CD8-positive, alpha-beta memory T cell (primary cell): ENCODE measurements at regions of chr6 and their contacts with region 1.

Region 1: GRCh38 chr6:26234421-26235296 is 130.3 kb upstream of the BTN3A2 start:
- DNase-seq: peak; percentile 38 to 84 (median 76)
- H3K4me3 ChIP-seq: peak overlapping the region; percentile 94
- H3K4me3 Mint-ChIP-seq: peak overlapping the region; percentile 87 to 95 (median 91)
- H3K27ac ChIP-seq: peak overlapping the region; percentile 88
- H3K27ac Mint-ChIP-seq: peak overlapping the region; percentile 87 to 98 (median 96)
- H3K4me1 ChIP-seq: peaks cover 19% of the 10 kb centered on the region
- H3K4me1 Mint-ChIP-seq: peaks cover 28 to 35% (median 35%) of the 10 kb centered on the region in 3 donors
- H3K27me3 ChIP-seq: no peaks in the 10 kb centered on the region
- H3K27me3 Mint-ChIP-seq: peaks cover 0 to 5% of the 10 kb centered on the region in 2 donors

Region 2: GRCh38 chr6:26175428-26176181 is 59.1 kb before region 1 on chr6:
- CTCF ChIA-PET with region 1: interaction called, 4 read pairs
- POLR2A ChIA-PET with region 1: interaction called, 24 read pairs
- DNase-seq: peak; percentile 8 to 63 (median 52)
- H3K4me3 ChIP-seq: no peak overlapping the region
- H3K4me3 Mint-ChIP-seq: peak overlapping the region in 2 of 7 donors; percentile 21 to 75
- H3K27ac ChIP-seq: no peak overlapping the region
- H3K27ac Mint-ChIP-seq: peak overlapping the region; percentile 8 to 89 (median 78)
- H3K4me1 ChIP-seq: peaks cover 36% of the 10 kb centered on the region
- H3K4me1 Mint-ChIP-seq: peaks cover 30 to 44% (median 40%) of the 10 kb centered on the region in 3 donors
- H3K27me3 ChIP-seq: no peaks in the 10 kb centered on the region
- H3K27me3 Mint-ChIP-seq: peaks cover 0 to 3% of the 10 kb centered on the region in 2 donors

Region 3: GRCh38 chr6:26183581-26184366 is 50.9 kb before region 1 on chr6:
- CTCF ChIA-PET with region 1: interaction called, 12 read pairs
- POLR2A ChIA-PET with region 1: interaction called, 36 read pairs
- DNase-seq: peak; percentile 31 to 78 (median 72)
- H3K4me3 ChIP-seq: peak overlapping the region; percentile 81
- H3K4me3 Mint-ChIP-seq: peak overlapping the region; percentile 86 to 99 (median 97)
- H3K27ac ChIP-seq: peak overlapping the region; percentile 71
- H3K27ac Mint-ChIP-seq: peak overlapping the region; percentile 71 to 99 (median 96)
- H3K4me1 ChIP-seq: peaks cover 33% of the 10 kb centered on the region
- H3K4me1 Mint-ChIP-seq: peaks cover 41 to 53% (median 44%) of the 10 kb centered on the region in 3 donors
- H3K27me3 ChIP-seq: no peaks in the 10 kb centered on the region
- H3K27me3 Mint-ChIP-seq: no peaks in the 10 kb centered on the region

Region 4: DNA sequence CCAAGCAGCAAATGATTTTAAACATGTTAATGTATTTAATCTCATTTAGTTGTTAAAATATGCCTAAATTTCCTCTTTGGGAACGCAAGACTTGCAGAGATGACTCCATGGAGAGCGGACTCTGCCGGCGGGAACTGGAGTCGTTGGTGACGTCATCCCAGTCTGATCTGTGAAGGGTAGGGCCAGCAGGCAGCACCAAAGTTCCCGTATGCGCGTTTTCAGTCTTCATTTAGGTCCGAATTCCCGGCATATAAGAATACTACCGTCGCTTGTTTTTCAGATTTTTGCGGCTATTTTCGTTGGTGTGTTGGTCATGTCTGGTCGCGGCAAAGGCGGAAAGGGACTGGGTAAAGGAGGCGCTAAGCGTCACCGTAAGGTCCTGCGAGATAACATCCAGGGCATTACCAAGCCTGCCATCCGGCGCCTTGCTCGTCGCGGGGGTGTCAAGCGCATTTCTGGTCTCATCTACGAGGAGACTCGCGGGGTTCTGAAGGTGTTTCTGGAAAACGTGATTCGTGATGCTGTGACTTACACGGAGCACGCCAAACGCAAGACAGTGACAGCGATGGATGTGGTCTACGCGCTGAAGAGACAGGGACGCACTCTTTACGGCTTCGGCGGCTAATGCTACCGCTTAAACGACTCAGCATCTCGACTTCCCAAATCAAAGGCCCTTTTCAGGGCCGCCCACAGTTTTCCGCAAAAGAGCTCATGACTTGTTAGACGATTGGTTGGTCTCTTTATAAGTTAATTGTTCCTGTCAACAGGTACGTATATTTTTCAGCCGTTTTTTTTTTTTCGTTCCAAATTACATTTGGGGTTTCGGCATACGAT is 30.1 kb before region 1 on chr6:
- CTCF ChIA-PET with region 1: interaction called, 51 read pairs
- POLR2A ChIA-PET with region 1: interaction called, 192 read pairs
- DNase-seq: peak; percentile 75 to 95 (median 87)
- H3K4me3 ChIP-seq: peak overlapping the region; percentile 73
- H3K4me3 Mint-ChIP-seq: no peak overlapping the region
- H3K27ac ChIP-seq: peak overlapping the region; percentile 99
- H3K27ac Mint-ChIP-seq: no peak overlapping the region
- H3K4me1 ChIP-seq: peaks cover 31% of the 10 kb centered on the region
- H3K4me1 Mint-ChIP-seq: peaks cover 18 to 31% (median 20%) of the 10 kb centered on the region in 3 donors
- H3K27me3 ChIP-seq: no peaks in the 10 kb centered on the region
- H3K27me3 Mint-ChIP-seq: peaks cover 0 to 8% of the 10 kb centered on the region in 2 donors

Region 5: GRCh38 chr6:26223650-26224546 is 10.8 kb before region 1 on chr6:
- CTCF ChIA-PET with region 1: interaction called, 14 read pairs
- POLR2A ChIA-PET with region 1: interaction called, 100 read pairs
- DNase-seq: peak; percentile 57 to 83 (median 78)
- H3K4me3 ChIP-seq: peak overlapping the region; percentile 87
- H3K4me3 Mint-ChIP-seq: no peak overlapping the region
- H3K27ac ChIP-seq: peak overlapping the region; percentile 72
- H3K27ac Mint-ChIP-seq: no peak overlapping the region
- H3K4me1 ChIP-seq: peaks cover 17% of the 10 kb centered on the region
- H3K4me1 Mint-ChIP-seq: peaks cover under 1 to 7% (median 7%) of the 10 kb centered on the region in 3 donors
- H3K27me3 ChIP-seq: no peaks in the 10 kb centered on the region
- H3K27me3 Mint-ChIP-seq: no peaks in the 10 kb centered on the region

Region 6: DNA sequence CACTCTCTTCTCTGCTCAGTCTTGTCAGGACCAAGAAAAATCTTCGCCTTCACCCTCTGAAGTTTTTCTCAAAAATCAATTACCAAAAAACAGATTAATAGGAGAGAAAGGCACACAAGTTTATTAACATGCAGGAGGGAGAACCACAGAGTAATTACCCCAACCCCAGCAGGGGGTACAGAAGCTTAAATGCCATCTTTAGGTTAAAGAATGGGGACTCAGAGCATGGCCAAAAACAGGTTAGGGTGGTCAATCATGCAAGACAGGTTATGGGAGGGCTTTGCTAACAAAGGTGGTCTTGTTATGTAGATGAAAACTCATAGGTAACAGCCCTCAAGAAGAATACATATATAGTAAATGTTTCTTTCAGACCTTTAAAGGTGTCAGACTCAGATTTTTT is 29.9 kb after region 1 on chr6:
- CTCF ChIA-PET with region 1: no interaction called
- POLR2A ChIA-PET with region 1: no interaction called
- DNase-seq: no peak
- H3K4me3 ChIP-seq: no peak overlapping the region
- H3K4me3 Mint-ChIP-seq: no peak overlapping the region
- H3K27ac ChIP-seq: no peak overlapping the region
- H3K27ac Mint-ChIP-seq: no peak overlapping the region
- H3K4me1 ChIP-seq: no peaks in the 10 kb centered on the region
- H3K4me1 Mint-ChIP-seq: peaks cover 0 to 4% (median 0%) of the 10 kb centered on the region in 3 donors
- H3K27me3 ChIP-seq: no peaks in the 10 kb centered on the region
- H3K27me3 Mint-ChIP-seq: peaks cover 0 to 5% of the 10 kb centered on the region in 2 donors

Region 7: GRCh38 chr6:27132532-27133280 is 898.0 kb after region 1 on chr6:
- CTCF ChIA-PET with region 1: no interaction called
- POLR2A ChIA-PET with region 1: interaction called, 11 read pairs
- DNase-seq: peak; percentile 77 to 98 (median 96)
- H3K4me3 ChIP-seq: peak overlapping the region; percentile 75
- H3K4me3 Mint-ChIP-seq: no peak overlapping the region
- H3K27ac ChIP-seq: peak overlapping the region; percentile 89
- H3K27ac Mint-ChIP-seq: no peak overlapping the region
- H3K4me1 ChIP-seq: peaks cover 20% of the 10 kb centered on the region
- H3K4me1 Mint-ChIP-seq: peaks cover 7 to 21% (median 16%) of the 10 kb centered on the region in 3 donors
- H3K27me3 ChIP-seq: no peaks in the 10 kb centered on the region
- H3K27me3 Mint-ChIP-seq: peaks cover 0 to 2% of the 10 kb centered on the region in 2 donors